Tibial artery (tissue), 4 donors: ENCODE measurements at regions of chr3 and their contacts with region 1.

Region 1: GRCh38 chr3:73945547-73945946 is 320.8 kb upstream of the PDZRN3 start:
- DNase-seq: no peak
- H3K4me3 ChIP-seq: no peak overlapping the region
- H3K27ac ChIP-seq: no peak overlapping the region
- H3K4me1 ChIP-seq: no peaks in the 10 kb centered on the region
- H3K27me3 ChIP-seq: no peaks in the 10 kb centered on the region
- CTCF ChIP-seq: no peak

Region 2: DNA sequence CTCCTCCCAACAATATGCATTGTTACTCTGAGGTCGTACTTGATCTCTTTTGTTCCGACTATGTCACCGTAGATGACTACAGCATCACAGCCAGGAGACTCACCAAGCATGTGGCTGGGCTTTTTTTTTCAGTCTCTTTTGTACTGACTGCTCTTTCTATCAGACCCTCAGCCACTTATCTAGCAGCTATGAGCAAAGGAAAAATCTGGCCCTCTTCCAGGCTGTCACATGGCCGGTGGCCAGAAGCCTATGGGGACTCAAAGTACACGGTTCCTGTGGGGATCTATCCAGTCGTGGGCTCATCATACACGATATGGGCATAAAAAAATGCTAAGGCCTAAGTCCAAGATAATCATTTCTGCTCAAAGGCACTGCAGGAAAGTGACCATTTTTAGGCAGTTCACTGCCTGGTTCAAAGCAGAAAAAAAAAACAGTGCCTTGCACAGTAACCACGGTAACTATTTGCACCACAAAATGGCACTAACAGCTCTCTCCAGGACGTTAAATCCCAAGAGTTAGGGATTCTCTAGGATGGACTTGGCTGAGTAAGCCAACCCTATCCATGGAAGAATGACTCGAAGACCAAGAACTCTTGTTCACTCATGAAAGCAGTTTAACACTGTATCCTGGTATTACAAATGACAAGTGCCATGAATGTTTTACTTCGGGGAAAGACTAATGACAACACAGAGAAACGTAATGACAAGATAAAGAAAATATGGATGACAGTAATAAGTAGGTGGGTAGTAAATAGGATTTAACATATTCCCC is 1147.6 kb before region 1 on chr3:
- intact Hi-C with region 1: loop called (anchors 5 kb)
- DNase-seq: no peak
- H3K4me3 ChIP-seq: no peak overlapping the region
- H3K27ac ChIP-seq: no peak overlapping the region
- H3K4me1 ChIP-seq: peaks cover 0 to 3% (median 0%) of the 10 kb centered on the region in 4 donors
- H3K27me3 ChIP-seq: no peaks in the 10 kb centered on the region
- CTCF ChIP-seq: no peak

Region 3: DNA sequence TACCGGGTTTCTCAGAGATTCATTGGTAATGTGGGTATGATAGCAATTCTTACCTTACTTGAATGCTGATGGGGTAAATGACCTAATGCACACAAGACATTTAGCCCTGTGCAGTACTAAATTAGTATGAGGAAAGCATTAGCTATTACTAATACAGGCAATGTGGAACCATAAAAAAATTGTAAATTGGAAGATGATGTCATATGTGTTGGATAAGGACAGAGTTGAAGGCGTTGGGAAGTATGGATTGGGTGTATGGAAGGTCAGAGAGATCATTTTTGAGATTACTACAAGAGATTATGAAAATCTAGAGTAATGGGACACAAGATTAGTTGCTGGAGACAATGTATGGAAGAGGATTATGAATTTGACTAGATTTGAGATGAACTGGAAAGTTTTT is 38.0 kb before region 1 on chr3:
- intact Hi-C with region 1: no loop called
- DNase-seq: no peak
- H3K4me3 ChIP-seq: no peak overlapping the region
- H3K27ac ChIP-seq: no peak overlapping the region
- H3K4me1 ChIP-seq: no peaks in the 10 kb centered on the region
- H3K27me3 ChIP-seq: peaks cover 0 to 5% of the 10 kb centered on the region in 2 donors
- CTCF ChIP-seq: no peak